Endothelial cell of umbilical vein (primary cell): ENCODE measurements at regions of chr17 and their contacts with region 1.

Region 1: DNA sequence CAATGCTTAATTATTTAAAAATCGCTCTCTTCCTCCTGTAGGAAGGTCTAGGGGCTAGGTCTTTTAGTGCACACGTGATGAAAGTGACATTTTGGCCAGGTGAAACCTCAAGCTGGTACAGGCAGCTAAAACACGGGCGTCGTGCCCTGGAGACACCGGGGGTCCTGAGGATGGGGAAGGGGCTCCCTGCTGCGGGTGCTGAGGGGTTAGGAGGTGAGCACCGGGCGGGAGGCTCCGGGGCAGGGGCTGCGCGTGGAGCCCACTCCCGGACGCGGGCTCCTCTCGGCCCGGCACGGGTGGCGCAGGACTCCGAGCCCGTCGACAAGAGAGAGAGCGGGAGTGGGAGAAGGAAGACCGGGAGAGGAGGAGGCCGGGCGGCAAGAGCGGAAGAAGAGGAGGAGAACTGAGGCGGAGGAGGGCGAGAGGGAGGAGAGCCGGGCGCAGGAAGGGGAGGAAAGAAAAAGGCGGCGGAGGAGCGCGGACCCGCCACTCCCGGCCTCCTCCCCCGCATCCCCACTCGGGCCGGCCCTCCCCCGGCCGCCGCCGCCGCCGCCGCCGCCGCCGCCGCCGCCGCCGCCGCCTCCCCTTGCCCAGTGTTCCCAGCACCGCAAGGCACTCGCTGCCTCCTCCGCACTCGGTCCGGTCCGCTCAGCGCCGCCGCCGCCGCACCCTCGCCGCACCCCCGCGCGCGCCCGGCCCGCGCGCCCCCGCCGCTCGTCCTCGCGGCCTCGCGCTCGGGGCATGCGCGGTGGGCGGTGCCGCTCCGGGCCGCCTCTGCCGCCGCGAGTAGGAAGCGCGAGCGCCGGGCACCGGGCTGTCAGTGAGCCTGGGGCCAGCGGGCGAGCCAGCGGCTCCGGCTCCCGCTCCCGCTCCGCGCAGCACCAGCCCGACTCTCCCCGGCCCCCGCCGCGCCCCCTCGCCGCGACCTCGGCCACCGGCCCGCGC is at the start of gene PRKCA:
- DNase-seq: peak; percentile 52
- H3K4me3 ChIP-seq: peak within 1 kb of the TSS; percentile 76 to 90 (median 83)
- H3K27ac ChIP-seq: peak within 1 kb of the TSS; percentile 27
- H3K4me1 ChIP-seq: peaks cover 26% of the 10 kb centered on the region
- H3K27me3 ChIP-seq: no peaks in the 10 kb centered on the region
- CTCF ChIP-seq: no peak
- POLR2A ChIP-seq: peak; percentile 93
- total RNA-seq, gene PRKCA: 27.3 and 34.2 TPM in 2 replicates

Region 2: GRCh38 chr17:66191593-66192382 is 110.3 kb before region 1 on chr17 and contains the start of gene CEP112:
- CTCF ChIA-PET with region 1: no interaction called
- POLR2A ChIA-PET with region 1: no interaction called
- dilution Hi-C with region 1: no loop called
- intact Hi-C with region 1: loop called (anchors 5 kb)
- DNase-seq: peak; percentile 74
- H3K4me3 ChIP-seq: peak within 1 kb of the TSS; percentile 76 to 92 (median 82)
- H3K27ac ChIP-seq: peak within 1 kb of the TSS; percentile 50
- H3K4me1 ChIP-seq: peaks cover 22% of the 10 kb centered on the region
- H3K27me3 ChIP-seq: no peaks in the 10 kb centered on the region
- CTCF ChIP-seq: no peak
- POLR2A ChIP-seq: no peak
- total RNA-seq, gene CEP112: 21.3 and 25.3 TPM in 2 replicates

Region 3: GRCh38 chr17:66275651-66276050 is 26.4 kb before region 1 on chr17:
- CTCF ChIA-PET with region 1: interaction called, 3 read pairs
- POLR2A ChIA-PET with region 1: interaction called, 10 read pairs
- dilution Hi-C with region 1: no loop called
- intact Hi-C with region 1: loop called (anchors 1 kb)
- DNase-seq: peak; percentile 90
- H3K4me3 ChIP-seq: no peak overlapping the region
- H3K27ac ChIP-seq: peak overlapping the region; percentile 87
- H3K4me1 ChIP-seq: peaks cover 30% of the 10 kb centered on the region
- H3K27me3 ChIP-seq: no peaks in the 10 kb centered on the region
- CTCF ChIP-seq: no peak
- POLR2A ChIP-seq: no peak

Region 4: DNA sequence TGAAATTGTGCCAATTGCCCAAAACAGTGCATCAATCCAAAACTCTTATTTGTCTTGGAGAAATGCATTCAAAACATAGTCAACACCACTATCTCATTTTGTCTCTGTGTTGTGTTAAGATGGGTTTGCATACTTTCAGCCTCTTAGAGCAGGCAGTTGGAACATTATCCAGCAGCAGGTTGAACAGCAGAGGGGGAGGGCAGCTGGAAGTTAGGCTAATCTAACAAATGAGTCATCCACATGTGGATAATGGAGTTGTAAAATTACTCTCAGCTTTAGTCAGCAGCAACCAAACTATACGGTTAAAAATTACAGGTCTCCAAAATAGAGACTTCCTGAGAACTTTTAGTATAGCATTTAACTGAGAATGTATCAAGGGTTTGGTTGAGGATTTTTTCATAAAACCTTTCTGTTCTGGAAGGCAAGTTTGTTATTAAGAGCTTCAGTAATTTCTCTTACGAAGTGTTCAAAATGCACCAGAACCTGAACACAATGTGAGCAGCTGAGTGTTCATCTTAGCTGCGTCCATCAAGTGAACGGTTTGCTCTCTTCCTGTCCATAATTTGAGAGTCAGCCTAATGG is 46.6 kb after region 1 on chr17:
- CTCF ChIA-PET with region 1: interaction called, 5 read pairs
- POLR2A ChIA-PET with region 1: no interaction called
- dilution Hi-C with region 1: no loop called
- intact Hi-C with region 1: loop called (anchors 5 kb)
- DNase-seq: peak; percentile 76
- H3K4me3 ChIP-seq: no peak overlapping the region
- H3K27ac ChIP-seq: peak overlapping the region; percentile 23
- H3K4me1 ChIP-seq: peaks cover 24% of the 10 kb centered on the region
- H3K27me3 ChIP-seq: no peaks in the 10 kb centered on the region
- CTCF ChIP-seq: no peak
- POLR2A ChIP-seq: no peak

Region 5: DNA sequence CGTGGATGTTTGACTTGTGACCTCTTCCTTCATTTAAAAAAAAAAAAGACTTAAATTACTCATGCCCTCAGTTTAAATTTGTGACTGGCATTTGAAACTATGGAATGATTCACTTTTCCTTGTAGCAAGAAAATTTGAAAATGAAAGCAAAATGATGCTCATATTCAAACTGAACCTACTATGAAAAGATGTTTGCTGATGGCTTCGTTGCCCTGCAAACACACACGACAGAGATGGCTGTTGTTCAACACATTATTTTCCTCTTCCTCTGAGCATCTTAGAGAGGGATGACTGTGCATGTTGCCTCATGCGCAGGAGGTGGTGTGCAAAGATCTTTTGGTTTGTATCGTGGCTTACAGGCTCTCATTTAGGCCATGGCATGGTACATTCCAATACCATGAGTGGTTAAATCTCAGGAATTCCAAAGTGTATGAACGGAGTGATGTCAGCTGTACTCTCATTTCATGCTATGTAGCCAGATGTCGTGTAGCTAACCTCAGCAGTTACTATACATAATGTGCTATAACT is 164.8 kb after region 1 on chr17:
- CTCF ChIA-PET with region 1: interaction called, 4 read pairs
- POLR2A ChIA-PET with region 1: no interaction called
- dilution Hi-C with region 1: no loop called
- intact Hi-C with region 1: loop called (anchors 1 kb)
- DNase-seq: peak; percentile 94
- H3K4me3 ChIP-seq: peak overlapping the region in 2 of 3 experiments; percentile 20 to 24
- H3K27ac ChIP-seq: peak overlapping the region; percentile 64
- H3K4me1 ChIP-seq: peaks cover 44% of the 10 kb centered on the region
- H3K27me3 ChIP-seq: no peaks in the 10 kb centered on the region
- CTCF ChIP-seq: no peak
- POLR2A ChIP-seq: peak; percentile 48